Activated naive CD4-positive, alpha-beta T cell treated with anti-CD3 and anti-CD28 coated beads for 36 hours (primary cell): ENCODE measurements at regions of chr6 and their contacts with region 1.

Region 1: DNA sequence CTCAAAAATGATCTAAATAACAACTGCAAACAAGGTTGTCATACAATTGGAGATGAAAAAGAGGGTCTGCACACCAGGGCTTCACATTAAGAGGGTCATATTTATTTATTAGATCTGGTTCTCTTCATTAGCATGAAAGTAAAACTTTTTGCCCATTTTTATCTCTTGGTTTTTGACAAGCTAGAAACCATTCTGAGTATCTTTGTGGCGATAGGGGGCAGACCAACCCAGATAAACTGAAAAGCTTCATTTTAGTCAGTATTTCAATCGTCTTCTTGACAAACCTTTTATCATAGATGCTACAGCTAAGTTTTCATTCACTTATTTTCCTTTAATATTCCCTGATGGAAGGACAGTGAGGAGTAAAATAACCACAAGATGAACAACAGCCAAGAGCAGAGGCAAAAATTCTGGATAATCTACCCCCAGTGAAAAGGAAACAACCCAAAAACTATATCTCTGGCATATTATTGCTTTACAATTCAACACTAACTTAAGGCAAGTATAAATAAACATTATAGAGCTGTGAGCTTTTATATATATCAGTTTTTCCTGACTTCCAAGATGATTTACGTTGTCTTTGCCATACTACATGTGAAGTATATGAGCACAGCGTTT is 45.2 kb downstream of the THEMIS start:
- DNase-seq: peak; percentile 79
- H3K4me3 Mint-ChIP-seq: peak overlapping the region; percentile 54
- H3K27ac Mint-ChIP-seq: peak overlapping the region; percentile 59
- H3K4me1 Mint-ChIP-seq: peaks cover 73% of the 10 kb centered on the region
- H3K27me3 Mint-ChIP-seq: no peaks in the 10 kb centered on the region

Region 2: DNA sequence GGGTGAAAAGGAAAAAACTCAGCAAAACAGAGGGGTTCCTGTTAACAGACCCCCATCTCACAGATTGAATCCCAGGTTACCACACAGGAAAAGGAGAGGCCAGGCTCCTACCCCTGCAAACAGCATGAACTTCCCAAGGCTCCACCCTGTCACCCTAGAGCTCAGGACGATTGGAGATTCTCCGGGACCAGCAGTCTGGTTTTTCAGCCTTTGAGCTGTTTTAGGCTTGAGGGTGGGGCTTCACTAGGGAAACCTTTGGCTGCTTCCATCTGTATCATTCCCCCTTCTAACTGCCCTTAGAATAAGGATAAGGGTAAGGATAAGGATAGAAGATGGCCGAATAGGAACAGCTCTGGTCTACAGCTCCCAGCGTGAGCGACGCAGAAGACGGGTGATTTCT is 262.7 kb before region 1 on chr6:
- CTCF ChIA-PET with region 1: no interaction called
- intact Hi-C with region 1: no loop called
- DNase-seq: no peak
- H3K4me3 Mint-ChIP-seq: no peak overlapping the region
- H3K27ac Mint-ChIP-seq: no peak overlapping the region
- H3K4me1 Mint-ChIP-seq: no peaks in the 10 kb centered on the region
- H3K27me3 Mint-ChIP-seq: peaks cover 4% of the 10 kb centered on the region

Region 3: DNA sequence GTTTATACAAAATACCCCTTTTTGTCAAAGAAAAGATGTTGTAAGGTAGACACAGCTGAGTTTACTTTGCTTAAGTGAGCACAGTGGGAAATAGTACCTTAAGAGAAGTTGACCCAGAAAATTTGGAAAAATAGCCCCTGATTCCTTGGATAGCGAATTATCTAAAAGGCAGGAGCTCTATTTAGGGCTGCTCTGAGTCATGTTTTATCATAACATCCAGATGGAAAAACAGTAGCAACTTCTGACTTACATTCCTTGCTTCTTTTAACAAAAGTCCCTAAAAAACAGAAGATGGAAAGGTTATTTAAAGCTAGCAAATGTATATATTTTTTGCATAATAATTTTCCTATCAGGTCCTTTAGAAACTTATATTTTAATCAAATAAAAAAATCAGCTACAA is 13.8 kb before region 1 on chr6:
- CTCF ChIA-PET with region 1: interaction called, 19 read pairs
- intact Hi-C with region 1: no loop called
- DNase-seq: no peak
- H3K4me3 Mint-ChIP-seq: no peak overlapping the region
- H3K27ac Mint-ChIP-seq: no peak overlapping the region
- H3K4me1 Mint-ChIP-seq: peaks cover 51% of the 10 kb centered on the region
- H3K27me3 Mint-ChIP-seq: no peaks in the 10 kb centered on the region

Region 4: DNA sequence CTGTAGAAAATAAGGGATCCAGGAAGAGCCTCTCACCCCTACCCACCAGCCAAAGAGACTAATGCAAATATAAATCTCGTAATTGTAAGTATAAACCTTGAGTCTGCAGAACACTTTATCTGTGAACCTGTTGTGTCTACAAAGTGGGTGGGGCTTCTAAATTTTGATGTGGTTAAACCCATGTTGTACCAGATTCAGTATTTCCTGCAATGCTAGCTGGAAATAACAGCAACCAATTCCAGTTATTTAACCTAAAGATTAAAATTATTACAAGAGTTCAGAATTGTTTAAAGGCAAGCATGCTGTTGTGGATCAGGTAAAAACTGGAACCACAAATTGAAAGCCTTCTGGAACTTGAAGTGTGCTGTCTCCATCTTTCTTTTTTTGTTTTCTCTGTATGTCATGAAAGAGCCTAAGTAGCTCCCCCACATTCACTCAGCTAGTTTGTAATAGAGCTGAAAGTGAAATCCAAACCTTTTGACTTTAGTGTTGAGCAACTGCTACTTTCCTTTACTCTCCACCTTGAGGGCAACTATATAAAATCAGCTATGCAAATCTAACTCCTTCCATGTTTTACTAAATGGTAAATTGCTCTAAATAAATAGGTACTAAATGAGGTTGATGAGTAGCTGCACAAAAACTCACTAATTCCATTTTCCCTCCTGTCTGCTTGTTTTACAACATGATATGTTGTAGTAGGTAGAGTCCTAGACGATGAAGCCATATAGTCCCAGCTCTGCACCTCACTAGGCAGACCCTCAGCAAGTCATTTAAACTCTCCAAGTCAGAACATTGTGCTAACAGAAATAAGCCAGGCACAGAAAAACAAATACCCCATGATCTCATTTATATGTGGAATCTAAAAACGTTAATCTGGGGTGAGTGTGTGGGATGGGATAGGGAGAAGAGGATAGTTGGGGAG is 63.1 kb after region 1 on chr6:
- CTCF ChIA-PET with region 1: interaction called, 11 read pairs
- intact Hi-C with region 1: no loop called
- DNase-seq: no peak
- H3K4me3 Mint-ChIP-seq: peak overlapping the region; percentile 32
- H3K27ac Mint-ChIP-seq: peak overlapping the region; percentile 31
- H3K4me1 Mint-ChIP-seq: peaks cover 80% of the 10 kb centered on the region
- H3K27me3 Mint-ChIP-seq: no peaks in the 10 kb centered on the region

Region 5: GRCh38 chr6:128112494-128112893 is 256.8 kb after region 1 on chr6:
- CTCF ChIA-PET with region 1: interaction called, 3 read pairs
- intact Hi-C with region 1: loop called (anchors 5 kb)
- DNase-seq: no peak
- H3K4me3 Mint-ChIP-seq: peak overlapping the region; percentile 44
- H3K27ac Mint-ChIP-seq: no peak overlapping the region
- H3K4me1 Mint-ChIP-seq: peaks cover 12% of the 10 kb centered on the region
- H3K27me3 Mint-ChIP-seq: no peaks in the 10 kb centered on the region

Region 6: GRCh38 chr6:128520436-128521281 is 665.0 kb after region 1 on chr6 and contains the start of gene PTPRK:
- CTCF ChIA-PET with region 1: interaction called, 10 read pairs
- intact Hi-C with region 1: loop called (anchors 1 kb)
- DNase-seq: peak; percentile 92
- H3K4me3 Mint-ChIP-seq: peak within 1 kb of the TSS; percentile 91
- H3K27ac Mint-ChIP-seq: peak within 1 kb of the TSS; percentile 63
- H3K4me1 Mint-ChIP-seq: peaks cover 8% of the 10 kb centered on the region
- H3K27me3 Mint-ChIP-seq: peaks cover 34% of the 10 kb centered on the region
- total RNA-seq, gene PTPRK: 5.5 to 8.0 TPM

Region 7: GRCh38 chr6:128763599-128764300 is 908.1 kb after region 1 on chr6:
- CTCF ChIA-PET with region 1: no interaction called
- intact Hi-C with region 1: no loop called
- DNase-seq: no peak
- H3K4me3 Mint-ChIP-seq: no peak overlapping the region
- H3K27ac Mint-ChIP-seq: no peak overlapping the region
- H3K4me1 Mint-ChIP-seq: peaks cover 2% of the 10 kb centered on the region
- H3K27me3 Mint-ChIP-seq: peaks cover 25% of the 10 kb centered on the region

Region 8: DNA sequence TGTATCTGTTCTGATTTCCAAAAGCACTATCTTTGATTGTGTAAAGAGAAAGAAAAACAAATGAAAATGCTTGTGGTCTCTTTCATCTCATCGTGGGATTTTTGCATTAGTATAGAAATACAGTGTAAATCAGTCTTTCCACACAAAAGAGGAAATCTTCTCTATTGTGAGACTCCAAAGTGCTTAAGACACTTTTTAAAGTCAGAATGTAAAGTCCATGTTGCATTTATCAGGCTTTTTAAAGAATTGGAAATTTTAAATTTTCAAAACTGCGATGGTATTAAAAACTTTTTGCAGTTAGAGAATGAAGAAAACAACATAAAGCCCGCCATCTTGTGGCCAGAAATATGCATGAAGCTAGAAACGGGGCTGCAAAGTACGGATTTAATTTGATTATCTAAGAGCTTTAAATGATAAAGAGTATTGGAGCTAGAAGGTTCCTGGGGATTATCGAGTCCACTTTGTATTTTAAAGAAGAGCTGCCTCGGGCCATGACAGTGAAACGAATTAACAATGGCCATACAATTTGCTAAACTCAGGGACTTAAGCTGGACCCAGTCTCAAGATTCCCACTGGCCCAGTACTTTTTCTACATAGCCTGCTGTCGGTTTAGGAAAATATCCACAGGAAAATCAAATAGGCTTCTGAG is 1514.7 kb after region 1 on chr6:
- CTCF ChIA-PET with region 1: no interaction called
- intact Hi-C with region 1: loop called (anchors 1 kb)
- DNase-seq: peak; percentile 77
- H3K4me3 Mint-ChIP-seq: no peak overlapping the region
- H3K27ac Mint-ChIP-seq: no peak overlapping the region
- H3K4me1 Mint-ChIP-seq: peaks cover 20% of the 10 kb centered on the region
- H3K27me3 Mint-ChIP-seq: no peaks in the 10 kb centered on the region